Left ventricle myocardium inferior (tissue), 1 donor: ENCODE measurements at regions of chr12 and their contacts with region 1.

Region 1: GRCh38 chr12:15584366-15585041 is 204.7 kb downstream of the EPS8 start:
- DNase-seq: no peak
- H3K4me3 ChIP-seq: no peak overlapping the region
- H3K27ac ChIP-seq: no peak overlapping the region
- H3K4me1 ChIP-seq: no peaks in the 10 kb centered on the region
- H3K27me3 ChIP-seq: peaks cover 37% of the 10 kb centered on the region
- CTCF ChIP-seq: peak; percentile 72

Region 2: GRCh38 chr12:15276088-15276698 is 308.3 kb before region 1 on chr12:
- intact Hi-C with region 1: loop called (anchors 10 kb)
- DNase-seq: no peak
- H3K4me3 ChIP-seq: no peak overlapping the region
- H3K27ac ChIP-seq: no peak overlapping the region
- H3K4me1 ChIP-seq: peaks cover 16% of the 10 kb centered on the region
- H3K27me3 ChIP-seq: peaks cover 16% of the 10 kb centered on the region
- CTCF ChIP-seq: peak; percentile 80

Region 3: DNA sequence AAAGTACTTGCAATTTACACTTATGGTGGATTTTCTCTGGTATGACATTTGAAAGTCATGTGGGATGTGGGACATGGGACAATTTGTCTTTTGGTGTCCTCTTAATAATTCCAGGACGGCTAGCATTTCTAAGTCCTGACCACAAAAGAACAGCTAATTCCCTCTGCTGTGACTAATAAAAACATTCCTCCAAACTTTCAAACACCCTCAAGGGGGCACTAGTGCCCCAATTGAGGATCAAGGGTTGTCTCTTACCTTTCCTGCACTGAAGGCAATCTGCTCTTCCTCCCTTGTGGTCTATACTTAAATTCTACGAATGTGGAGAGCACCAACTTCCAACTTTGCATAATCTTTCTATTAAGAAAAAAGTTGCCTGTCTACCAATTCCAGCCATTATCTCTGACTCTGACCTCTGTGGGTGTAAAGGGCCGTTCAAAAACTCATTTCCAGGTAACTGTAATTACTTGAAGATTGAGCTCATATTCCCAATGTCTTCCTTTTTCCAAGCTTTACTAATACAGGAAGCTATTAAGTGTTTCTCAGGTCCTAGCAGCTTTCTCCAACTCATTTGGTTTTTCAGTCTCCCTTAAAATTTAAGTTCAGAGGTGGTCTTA is 52.0 kb before region 1 on chr12:
- intact Hi-C with region 1: loop called (anchors 5 kb)
- DNase-seq: no peak
- H3K4me3 ChIP-seq: no peak overlapping the region
- H3K27ac ChIP-seq: no peak overlapping the region
- H3K4me1 ChIP-seq: no peaks in the 10 kb centered on the region
- H3K27me3 ChIP-seq: no peaks in the 10 kb centered on the region
- CTCF ChIP-seq: peak; percentile 57